ENCODE measurements at regions of chr22 and their contacts with region 1.

Region 1: DNA sequence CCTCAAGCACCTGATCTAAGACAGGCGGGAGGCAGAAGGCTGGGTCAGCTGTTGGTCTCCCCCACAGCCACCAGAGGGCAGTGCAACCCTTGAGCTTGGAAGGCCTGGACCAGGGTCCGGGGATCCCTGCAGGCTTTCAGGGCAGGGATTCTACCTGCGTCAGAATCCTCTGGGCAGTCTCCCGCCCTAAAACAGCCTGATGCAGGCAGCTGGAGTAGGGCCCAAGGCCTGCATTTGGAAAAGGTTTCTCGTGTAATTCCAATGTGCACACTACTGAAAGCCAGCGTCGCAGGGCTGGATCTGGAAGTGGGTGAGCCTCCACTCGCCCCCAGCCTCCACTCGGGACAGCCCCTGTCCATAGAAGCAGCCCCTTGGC is 31.8 kb downstream of the BID start:
- DNase-seq: peak; percentile 81
- H3K4me3 Mint-ChIP-seq: no peak overlapping the region
- H3K27ac Mint-ChIP-seq: no peak overlapping the region
- H3K4me1 Mint-ChIP-seq: peaks cover 2% of the 10 kb centered on the region
- H3K27me3 Mint-ChIP-seq: no peaks in the 10 kb centered on the region

Region 2: GRCh38 chr22:17754233-17754925 is 11.9 kb after region 1 on chr22:
- CTCF ChIA-PET with region 1: interaction called, 11 read pairs
- POLR2A ChIA-PET with region 1: interaction called, 3 read pairs
- intact Hi-C with region 1: no loop called
- DNase-seq: peak; percentile 56
- H3K4me3 Mint-ChIP-seq: no peak overlapping the region
- H3K27ac Mint-ChIP-seq: no peak overlapping the region
- H3K4me1 Mint-ChIP-seq: peaks cover 3% of the 10 kb centered on the region
- H3K27me3 Mint-ChIP-seq: no peaks in the 10 kb centered on the region

Region 3: DNA sequence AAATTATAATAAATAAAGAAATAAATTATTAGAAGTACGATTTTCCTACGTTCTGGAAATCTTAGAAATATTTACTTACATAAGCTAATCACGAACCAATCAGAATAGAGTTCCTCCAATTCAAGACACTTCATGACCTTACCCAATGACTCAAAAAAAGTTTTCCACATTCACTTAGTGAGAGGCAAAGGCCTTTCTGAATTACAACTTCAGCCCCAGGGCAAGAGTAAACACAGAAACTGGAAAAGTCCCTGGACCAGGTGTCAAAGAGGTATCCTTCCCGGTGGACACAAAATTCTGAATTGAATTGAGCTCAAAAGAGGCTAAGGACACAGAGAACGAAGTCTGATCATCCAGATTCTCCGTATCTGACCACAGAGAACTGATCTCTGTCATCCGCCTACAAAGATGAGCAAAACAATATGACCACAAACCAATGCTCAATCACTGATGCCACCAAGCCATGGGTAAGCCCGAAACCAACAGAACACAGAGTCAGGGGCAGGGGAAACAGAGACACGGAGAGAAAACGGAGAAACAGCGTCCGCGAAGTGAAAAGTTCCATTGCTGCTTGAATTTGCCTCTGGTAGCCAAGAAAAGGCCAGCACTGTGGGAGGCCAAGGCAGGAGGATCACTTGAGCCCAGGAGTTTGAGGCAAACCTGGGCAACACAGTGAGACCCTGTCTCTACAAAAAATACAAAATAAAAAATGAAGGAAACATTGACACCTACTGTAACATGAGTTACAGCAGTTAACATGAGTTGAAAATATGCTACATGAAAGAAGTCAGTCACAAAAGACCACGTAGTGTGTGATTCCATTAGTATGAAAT is 24.9 kb after region 1 on chr22:
- CTCF ChIA-PET with region 1: interaction called, 35 read pairs
- POLR2A ChIA-PET with region 1: interaction called, 3 read pairs
- intact Hi-C with region 1: loop called (anchors 2 kb)
- DNase-seq: peak; percentile 82
- H3K4me3 Mint-ChIP-seq: peak overlapping the region; percentile 3
- H3K27ac Mint-ChIP-seq: peak overlapping the region; percentile 18
- H3K4me1 Mint-ChIP-seq: peaks cover 40% of the 10 kb centered on the region
- H3K27me3 Mint-ChIP-seq: peaks cover 4% of the 10 kb centered on the region

Region 4: DNA sequence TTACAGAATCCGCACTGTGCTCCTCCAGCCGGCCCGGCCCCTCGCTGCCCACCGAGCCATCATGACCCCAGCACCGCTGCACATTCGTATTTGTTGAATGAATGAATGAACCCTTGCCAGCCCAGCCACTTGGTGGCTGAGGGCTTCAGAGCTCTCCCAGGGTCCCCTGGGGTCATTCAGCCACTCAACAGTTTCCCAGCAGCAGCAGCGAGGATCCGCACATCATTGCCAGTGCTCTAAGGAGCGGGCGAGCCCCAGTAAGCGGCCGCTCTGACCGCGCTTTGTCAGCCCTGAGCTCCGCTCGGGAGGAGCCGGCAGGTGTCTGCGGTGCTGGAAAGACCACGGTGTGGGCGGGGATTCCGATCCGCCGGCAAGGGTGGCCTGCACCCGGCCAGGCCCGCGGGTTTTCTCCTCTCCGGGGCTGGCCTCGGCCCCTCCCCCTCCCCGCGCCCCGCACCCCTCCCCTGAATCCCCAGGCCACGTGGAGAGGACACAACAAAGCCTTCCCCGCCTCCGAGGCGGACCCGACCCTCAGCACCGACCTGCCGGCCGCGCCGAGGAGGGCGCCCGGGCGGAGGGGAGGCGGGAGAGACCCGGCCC is 31.2 kb after region 1 on chr22:
- CTCF ChIA-PET with region 1: interaction called, 35 read pairs
- POLR2A ChIA-PET with region 1: no interaction called
- intact Hi-C with region 1: no loop called
- DNase-seq: peak; percentile 82
- H3K4me3 Mint-ChIP-seq: peak overlapping the region; percentile 76
- H3K27ac Mint-ChIP-seq: no peak overlapping the region
- H3K4me1 Mint-ChIP-seq: peaks cover 60% of the 10 kb centered on the region
- H3K27me3 Mint-ChIP-seq: peaks cover 7% of the 10 kb centered on the region

Region 5: DNA sequence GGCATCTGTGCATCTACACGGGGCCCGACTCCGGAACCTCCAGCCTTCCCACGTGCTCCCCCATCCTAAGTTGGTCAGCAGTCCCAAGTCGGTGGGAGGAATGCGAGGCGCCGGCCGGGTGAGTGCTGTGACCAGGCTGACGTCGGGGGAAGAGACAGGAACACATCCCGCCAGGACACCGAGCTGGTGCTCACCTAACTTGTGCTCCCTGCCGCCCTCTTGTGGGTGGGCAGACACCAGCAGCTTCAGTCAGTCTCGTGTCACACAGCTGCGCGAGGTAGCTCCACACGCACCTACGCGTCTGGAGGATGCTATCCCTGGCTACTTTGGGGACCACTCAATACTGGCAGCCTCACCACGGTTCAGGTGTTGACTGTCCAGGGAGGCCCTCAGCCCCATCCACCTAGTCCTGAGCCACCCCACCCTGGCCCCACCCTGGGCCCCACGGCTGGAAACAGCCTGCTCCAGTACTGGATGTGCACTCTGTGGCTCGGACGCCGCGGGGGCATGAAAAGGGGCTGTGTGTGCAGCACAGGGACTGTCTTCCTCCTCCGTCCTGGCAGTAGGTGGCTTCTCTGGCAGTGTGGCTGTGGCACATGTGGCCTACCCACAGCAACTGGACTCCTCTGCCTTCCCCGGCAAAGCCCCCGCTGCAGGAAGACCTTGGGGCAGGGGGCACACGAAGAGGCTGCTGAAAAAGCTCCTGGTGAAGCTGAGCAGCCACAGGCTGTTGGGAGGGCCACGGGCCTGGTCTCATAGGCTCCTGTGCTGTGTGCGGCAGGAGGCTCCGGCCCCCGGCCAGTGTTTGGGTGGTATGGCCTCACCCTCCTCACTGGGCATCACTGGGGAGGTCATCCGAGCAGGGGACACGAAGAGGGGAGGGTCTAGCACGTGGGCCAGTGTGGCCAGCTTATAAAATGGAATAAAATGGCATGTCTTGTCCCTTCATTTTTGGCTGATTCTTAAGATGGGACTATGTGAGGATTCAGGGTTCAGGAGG is 43.0 kb after region 1 on chr22:
- CTCF ChIA-PET with region 1: interaction called, 145 read pairs
- POLR2A ChIA-PET with region 1: interaction called, 3 read pairs
- intact Hi-C with region 1: loop called (anchors 2 kb)
- DNase-seq: peak; percentile 79
- H3K4me3 Mint-ChIP-seq: no peak overlapping the region
- H3K27ac Mint-ChIP-seq: no peak overlapping the region
- H3K4me1 Mint-ChIP-seq: peaks cover 24% of the 10 kb centered on the region
- H3K27me3 Mint-ChIP-seq: no peaks in the 10 kb centered on the region

Region 6: GRCh38 chr22:17830043-17830961 is 87.8 kb after region 1 on chr22:
- CTCF ChIA-PET with region 1: interaction called, 24 read pairs
- POLR2A ChIA-PET with region 1: no interaction called
- intact Hi-C with region 1: loop called (anchors 10 kb)
- DNase-seq: peak; percentile 88
- H3K4me3 Mint-ChIP-seq: no peak overlapping the region
- H3K27ac Mint-ChIP-seq: no peak overlapping the region
- H3K4me1 Mint-ChIP-seq: no peaks in the 10 kb centered on the region
- H3K27me3 Mint-ChIP-seq: no peaks in the 10 kb centered on the region

Region 7: GRCh38 chr22:19330865-19331418 is 1588.4 kb after region 1 on chr22:
- CTCF ChIA-PET with region 1: no interaction called
- POLR2A ChIA-PET with region 1: interaction called, 10 read pairs
- intact Hi-C with region 1: no loop called
- DNase-seq: no peak
- H3K4me3 Mint-ChIP-seq: no peak overlapping the region
- H3K27ac Mint-ChIP-seq: no peak overlapping the region
- H3K4me1 Mint-ChIP-seq: no peaks in the 10 kb centered on the region
- H3K27me3 Mint-ChIP-seq: no peaks in the 10 kb centered on the region